ENCODE measurements at regions of chr16 and their contacts with region 1.

Region 1: DNA sequence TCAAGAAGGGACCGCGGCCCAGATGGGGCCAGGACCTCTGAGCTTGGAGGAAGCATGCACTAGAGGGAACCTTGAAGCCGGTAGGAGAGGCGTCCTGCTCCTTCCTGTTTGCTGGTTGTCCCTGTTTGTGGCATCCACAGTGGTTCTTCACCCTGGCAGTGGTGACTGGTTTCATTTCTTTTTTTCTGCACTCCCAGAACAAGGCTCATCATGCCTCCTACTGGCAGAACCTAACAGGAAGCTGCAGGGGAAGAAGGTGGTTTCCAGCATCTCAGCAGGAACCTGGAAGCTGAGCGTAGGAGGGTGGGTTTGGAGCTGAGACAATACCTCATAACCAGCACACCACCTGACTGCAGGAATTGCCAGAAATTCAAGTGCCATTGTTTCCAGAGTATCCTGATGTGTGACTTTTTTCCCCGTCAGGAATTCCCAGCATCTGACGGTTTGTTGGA is 5.8 kb downstream of the TMEM231 start:
- H3K4me3 Mint-ChIP-seq: no peak overlapping the region
- H3K27ac Mint-ChIP-seq: peak overlapping the region; percentile 53
- H3K4me1 Mint-ChIP-seq: peaks cover 15% of the 10 kb centered on the region
- H3K27me3 Mint-ChIP-seq: peaks cover 19% of the 10 kb centered on the region

Region 2: GRCh38 chr16:75198135-75198600 is 352.1 kb before region 1 on chr16:
- intact Hi-C with region 1: loop called (anchors 5 kb)
- H3K4me3 Mint-ChIP-seq: no peak overlapping the region
- H3K27ac Mint-ChIP-seq: no peak overlapping the region
- H3K4me1 Mint-ChIP-seq: peaks cover 6% of the 10 kb centered on the region
- H3K27me3 Mint-ChIP-seq: peaks cover 94% of the 10 kb centered on the region

Region 3: DNA sequence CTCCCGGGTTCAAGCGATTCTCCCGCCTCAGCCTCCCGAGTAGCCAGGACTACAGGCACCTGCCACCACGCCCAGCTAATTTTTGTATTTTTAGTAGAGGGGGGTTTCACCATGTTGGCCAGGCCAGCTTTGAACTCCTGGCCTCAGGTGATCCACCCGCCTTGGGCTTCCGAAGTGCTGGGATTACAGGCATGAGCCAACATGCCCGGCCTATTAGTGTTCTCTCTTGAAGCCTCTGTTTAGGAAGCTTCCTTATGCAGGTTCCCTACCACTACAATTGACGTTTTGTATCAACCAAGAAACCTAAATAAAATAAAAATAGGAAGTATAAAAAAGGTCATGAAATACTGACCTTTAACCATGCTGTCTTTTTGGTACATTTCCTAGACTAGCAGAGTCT is 30.4 kb before region 1 on chr16:
- intact Hi-C with region 1: loop called (anchors 1 kb)
- H3K4me3 Mint-ChIP-seq: no peak overlapping the region
- H3K27ac Mint-ChIP-seq: no peak overlapping the region
- H3K4me1 Mint-ChIP-seq: peaks cover 12% of the 10 kb centered on the region
- H3K27me3 Mint-ChIP-seq: peaks cover 13% of the 10 kb centered on the region

Region 4: GRCh38 chr16:75566040-75566810 is 16.0 kb after region 1 on chr16 and contains the start of gene GABARAPL2:
- intact Hi-C with region 1: loop called (anchors 2 kb)
- H3K4me3 Mint-ChIP-seq: peak within 1 kb of the TSS; percentile 96
- H3K27ac Mint-ChIP-seq: peak within 1 kb of the TSS; percentile 84
- H3K4me1 Mint-ChIP-seq: peaks cover 44% of the 10 kb centered on the region
- H3K27me3 Mint-ChIP-seq: peaks cover 19% of the 10 kb centered on the region